Activated CD4-positive, alpha-beta T cell treated with anti-CD3 and anti-CD28 coated beads, Interleukin-2, amount 10 ng/mL, durations not matched to agents 7 days and 5 days (primary cell): ENCODE measurements at regions of chr1 and their contacts with region 1.

Region 1: DNA sequence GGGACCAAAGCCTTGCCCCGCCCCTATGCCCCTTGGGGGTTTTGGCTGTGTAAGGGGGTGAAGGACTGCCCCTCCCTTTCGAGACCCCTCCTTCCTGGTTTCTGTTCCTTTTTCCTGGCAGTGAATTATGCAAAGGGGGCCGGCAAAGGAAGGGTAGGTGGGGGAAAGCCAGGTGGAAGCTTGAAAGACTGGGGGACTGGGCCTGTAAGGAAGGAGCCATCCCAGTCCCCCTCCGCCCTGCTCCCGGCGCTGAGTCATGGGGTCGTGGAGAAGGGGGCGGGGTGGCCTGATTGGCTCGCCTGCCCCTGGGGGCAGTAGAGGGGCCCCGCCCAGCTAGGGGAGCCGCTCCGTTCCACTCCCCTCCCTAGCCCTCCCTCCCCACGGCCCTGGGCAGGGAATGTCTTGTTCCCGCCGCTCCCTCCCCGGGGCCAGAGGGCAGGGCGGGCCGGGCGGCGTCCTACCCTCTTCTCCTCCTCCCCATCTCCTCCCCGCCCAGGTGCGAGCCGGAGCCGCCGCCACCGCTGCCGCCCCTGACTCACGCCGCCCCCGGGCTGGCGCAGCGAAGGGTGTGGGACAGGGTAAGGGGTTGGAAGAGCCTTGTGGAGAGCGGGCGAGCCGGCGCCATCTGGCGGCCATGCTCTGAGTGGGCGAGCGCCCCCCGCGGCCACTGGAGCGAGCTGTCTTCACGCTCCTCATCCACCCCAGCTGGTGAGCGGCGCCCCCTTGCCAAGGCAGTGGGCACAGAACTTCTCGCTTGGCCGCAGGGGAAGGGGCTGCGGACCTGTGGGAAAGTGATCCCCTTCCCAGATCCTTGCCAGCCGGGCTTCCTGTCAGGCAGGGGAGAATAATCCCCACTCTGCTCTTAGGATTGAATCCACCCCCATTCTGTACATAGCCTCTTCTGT is 14.7 kb downstream of the ZBTB7B start:
- DNase-seq: peak; percentile 85
- H3K4me3 Mint-ChIP-seq: no peak overlapping the region
- H3K27ac Mint-ChIP-seq: peak overlapping the region; percentile 84
- H3K4me1 Mint-ChIP-seq: peaks cover 70% of the 10 kb centered on the region
- H3K27me3 Mint-ChIP-seq: no peaks in the 10 kb centered on the region

Region 2: DNA sequence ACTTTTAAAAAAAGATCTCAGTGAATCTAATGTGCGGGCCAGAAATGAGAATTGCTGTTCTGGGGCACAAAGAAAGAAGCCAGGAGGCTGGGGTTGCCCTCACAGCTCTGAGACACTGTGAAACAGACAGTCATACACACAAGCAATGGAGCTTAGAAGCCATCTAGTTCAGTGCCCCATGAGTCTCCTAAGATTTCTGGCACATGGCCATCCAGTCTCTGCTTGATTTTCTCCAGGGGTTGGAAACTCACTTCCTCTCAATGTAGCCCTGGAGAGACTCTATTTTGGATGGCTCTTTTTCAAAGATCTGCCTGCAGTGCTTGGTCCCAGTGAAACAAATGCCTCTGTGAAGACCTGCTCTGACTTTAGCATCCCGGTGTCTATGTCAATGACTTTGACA is 185.8 kb before region 1 on chr1:
- CTCF ChIA-PET with region 1: no interaction called
- POLR2A ChIA-PET with region 1: no interaction called
- DNase-seq: no peak
- H3K4me3 Mint-ChIP-seq: no peak overlapping the region
- H3K27ac Mint-ChIP-seq: no peak overlapping the region
- H3K4me1 Mint-ChIP-seq: peaks cover 9% of the 10 kb centered on the region
- H3K27me3 Mint-ChIP-seq: no peaks in the 10 kb centered on the region

Region 3: GRCh38 chr1:154955718-154956543 is 61.4 kb before region 1 on chr1 and contains the start of gene PBXIP1:
- CTCF ChIA-PET with region 1: interaction called, 23 read pairs
- POLR2A ChIA-PET with region 1: interaction called, 7 read pairs
- DNase-seq: peak; percentile 91
- H3K4me3 Mint-ChIP-seq: peak within 1 kb of the TSS; percentile 96
- H3K27ac Mint-ChIP-seq: peak within 1 kb of the TSS; percentile 96
- H3K4me1 Mint-ChIP-seq: peaks cover 86% of the 10 kb centered on the region
- H3K27me3 Mint-ChIP-seq: no peaks in the 10 kb centered on the region
- total RNA-seq, gene PBXIP1: 74.6 to 92.0 TPM

Region 4: DNA sequence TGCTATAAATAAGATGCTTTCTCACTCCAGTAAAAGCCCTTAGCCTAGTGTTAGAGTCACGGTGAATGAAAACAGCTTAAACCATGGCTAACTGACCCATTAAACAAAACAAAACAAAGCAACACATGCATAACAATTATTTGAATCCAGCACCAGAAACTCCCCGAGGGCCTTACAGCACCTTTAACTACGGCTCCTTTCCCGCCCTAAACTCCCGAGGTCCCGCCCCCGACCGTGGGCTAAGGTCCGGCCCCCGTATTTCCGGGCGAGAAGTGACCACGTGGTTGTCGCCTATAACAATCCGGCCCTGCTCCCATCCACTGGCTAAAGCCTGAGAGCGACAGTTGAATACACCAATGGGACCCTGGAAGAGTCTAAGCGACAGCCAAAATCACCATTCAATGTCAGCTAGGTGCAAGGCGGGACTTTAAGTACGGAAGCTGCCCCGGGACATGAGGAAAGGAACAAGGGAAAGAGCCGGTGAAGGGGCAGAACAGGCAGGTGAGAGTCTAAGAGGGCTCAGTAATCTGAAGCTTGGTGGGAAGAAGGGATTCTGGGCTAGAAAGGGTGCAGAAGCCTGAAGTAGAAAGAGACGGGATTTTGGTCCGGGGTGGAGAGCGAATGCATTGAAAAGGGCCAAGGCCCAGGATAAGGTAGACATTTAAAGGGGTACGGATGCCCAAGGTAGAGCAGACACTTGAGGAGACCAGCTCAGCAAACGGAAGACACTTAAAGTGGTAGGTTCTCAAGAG is 34.2 kb before region 1 on chr1 and contains the start of gene FLAD1:
- CTCF ChIA-PET with region 1: interaction called, 29 read pairs
- POLR2A ChIA-PET with region 1: interaction called, 7 read pairs
- DNase-seq: peak; percentile 98
- H3K4me3 Mint-ChIP-seq: no peak within 1 kb of the TSS
- H3K27ac Mint-ChIP-seq: no peak within 1 kb of the TSS
- H3K4me1 Mint-ChIP-seq: peaks cover 33% of the 10 kb centered on the region
- H3K27me3 Mint-ChIP-seq: no peaks in the 10 kb centered on the region
- total RNA-seq, gene FLAD1: 41.2 to 41.3 TPM

Region 5: GRCh38 chr1:155001675-155002463 is 15.4 kb before region 1 on chr1:
- CTCF ChIA-PET with region 1: interaction called, 184 read pairs
- POLR2A ChIA-PET with region 1: interaction called, 3 read pairs
- DNase-seq: peak; percentile 99
- H3K4me3 Mint-ChIP-seq: peak overlapping the region; percentile 93
- H3K27ac Mint-ChIP-seq: peak overlapping the region; percentile 96
- H3K4me1 Mint-ChIP-seq: peaks cover 60% of the 10 kb centered on the region
- H3K27me3 Mint-ChIP-seq: no peaks in the 10 kb centered on the region

Region 6: DNA sequence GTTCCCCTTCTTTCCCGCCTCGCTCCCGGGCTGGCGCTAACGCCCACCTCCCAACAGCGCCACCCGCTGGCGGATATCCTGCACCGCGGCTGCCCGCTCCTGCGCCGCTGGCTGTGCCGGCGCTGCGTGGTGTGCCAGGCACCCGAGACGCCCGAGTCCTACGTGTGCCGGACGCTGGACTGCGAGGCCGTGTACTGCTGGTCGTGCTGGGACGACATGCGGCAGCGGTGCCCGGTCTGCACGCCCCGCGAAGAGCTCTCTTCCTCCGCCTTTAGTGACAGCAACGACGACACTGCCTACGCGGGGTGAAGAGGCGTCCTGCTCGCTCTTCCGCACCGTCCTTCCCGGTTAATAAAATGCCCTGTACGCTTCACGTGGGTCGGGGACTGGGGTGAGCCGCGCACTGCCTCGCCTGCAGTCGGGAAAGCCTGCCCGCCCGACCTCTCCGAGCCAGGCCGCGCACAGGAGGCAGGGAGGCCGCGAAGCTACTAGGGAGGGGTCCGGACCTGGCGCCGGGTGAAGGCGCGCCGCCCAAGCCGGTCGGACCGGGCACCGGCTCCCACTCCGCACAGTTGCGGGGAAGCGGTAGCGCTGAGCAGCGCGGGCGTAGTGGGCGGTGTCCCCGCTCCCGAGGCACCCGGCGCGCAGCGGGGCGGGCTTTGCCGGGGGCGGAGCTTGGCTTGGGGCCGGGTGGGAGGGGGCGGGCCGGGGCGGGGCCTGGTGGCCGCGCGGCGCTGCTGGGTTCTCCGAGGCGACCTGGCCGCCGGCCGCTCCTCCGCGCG is 33.5 kb after region 1 on chr1 and contains the start of gene ADAM15:
- CTCF ChIA-PET with region 1: interaction called, 222 read pairs
- POLR2A ChIA-PET with region 1: no interaction called
- DNase-seq: peak; percentile 81
- H3K4me3 Mint-ChIP-seq: peak within 1 kb of the TSS; percentile 82
- H3K27ac Mint-ChIP-seq: peak within 1 kb of the TSS; percentile 81
- H3K4me1 Mint-ChIP-seq: peaks cover 30% of the 10 kb centered on the region
- H3K27me3 Mint-ChIP-seq: no peaks in the 10 kb centered on the region
- total RNA-seq, gene ADAM15: 40.2 to 45.0 TPM